Naive thymus-derived CD4-positive, alpha-beta T cell (primary cell): ENCODE measurements at regions of chr3 and their contacts with region 1.

Region 1: GRCh38 chr3:163011590-163011989 is 1515.0 kb downstream of the OTOL1 start:
- DNase-seq: no peak
- ATAC-seq: no peak
- H3K4me3 ChIP-seq: no peak overlapping the region
- H3K4me3 Mint-ChIP-seq: no peak overlapping the region
- H3K27ac ChIP-seq: no peak overlapping the region
- H3K27ac Mint-ChIP-seq: no peak overlapping the region
- H3K4me1 ChIP-seq: no peaks in the 10 kb centered on the region
- H3K4me1 Mint-ChIP-seq: no peaks in the 10 kb centered on the region
- H3K27me3 ChIP-seq: no peaks in the 10 kb centered on the region
- H3K27me3 Mint-ChIP-seq: no peaks in the 10 kb centered on the region

Region 2: DNA sequence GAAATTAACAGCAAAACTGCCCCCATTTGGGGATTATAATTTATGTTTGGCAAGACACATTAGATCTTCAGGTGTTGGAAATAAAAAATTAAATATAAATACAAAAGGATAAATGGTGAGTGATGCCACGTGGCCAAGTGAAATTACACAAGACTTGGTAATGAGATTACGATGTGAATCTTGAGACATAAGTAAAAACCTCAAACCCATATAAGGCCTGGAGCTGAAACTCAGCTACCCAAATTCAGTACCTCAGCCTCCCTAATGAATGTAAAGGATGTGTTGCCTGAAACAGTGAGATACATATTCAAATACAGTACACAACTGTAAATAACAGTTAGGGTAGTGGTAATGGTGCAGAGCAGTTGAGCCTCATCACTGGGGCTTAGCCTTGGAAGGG is 368.3 kb before region 1 on chr3:
- CTCF ChIA-PET with region 1: no interaction called
- POLR2A ChIA-PET with region 1: no interaction called
- intact Hi-C with region 1: no loop called
- DNase-seq: no peak
- ATAC-seq: no peak
- H3K4me3 ChIP-seq: no peak overlapping the region
- H3K4me3 Mint-ChIP-seq: no peak overlapping the region
- H3K27ac ChIP-seq: no peak overlapping the region
- H3K27ac Mint-ChIP-seq: no peak overlapping the region
- H3K4me1 ChIP-seq: no peaks in the 10 kb centered on the region
- H3K4me1 Mint-ChIP-seq: no peaks in the 10 kb centered on the region
- H3K27me3 ChIP-seq: no peaks in the 10 kb centered on the region
- H3K27me3 Mint-ChIP-seq: no peaks in the 10 kb centered on the region

Region 3: DNA sequence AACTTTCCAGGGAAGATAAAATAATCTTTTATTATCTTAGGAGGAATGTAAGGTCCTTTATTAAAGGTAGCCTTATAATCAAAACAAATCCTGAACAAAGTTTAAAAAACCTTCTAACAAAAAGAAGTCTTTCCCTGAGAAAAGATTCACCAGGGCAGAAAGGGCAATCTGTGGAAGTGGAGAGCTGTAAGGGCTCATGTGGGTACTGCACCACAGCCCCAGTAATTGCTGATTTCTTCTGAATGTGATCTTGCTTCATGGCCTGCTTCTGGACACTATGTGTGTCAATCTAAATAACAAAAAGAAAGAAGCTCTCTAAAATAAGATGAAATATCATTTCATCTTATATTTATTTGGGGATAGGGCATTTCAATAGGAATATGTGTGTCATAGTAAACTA is 13.4 kb before region 1 on chr3:
- CTCF ChIA-PET with region 1: no interaction called
- POLR2A ChIA-PET with region 1: no interaction called
- intact Hi-C with region 1: loop called (anchors 1 kb)
- DNase-seq: no peak
- ATAC-seq: no peak
- H3K4me3 ChIP-seq: no peak overlapping the region
- H3K4me3 Mint-ChIP-seq: no peak overlapping the region
- H3K27ac ChIP-seq: no peak overlapping the region
- H3K27ac Mint-ChIP-seq: no peak overlapping the region
- H3K4me1 ChIP-seq: no peaks in the 10 kb centered on the region
- H3K4me1 Mint-ChIP-seq: no peaks in the 10 kb centered on the region
- H3K27me3 ChIP-seq: no peaks in the 10 kb centered on the region
- H3K27me3 Mint-ChIP-seq: no peaks in the 10 kb centered on the region